CD8-positive, alpha-beta memory T cell (primary cell): ENCODE measurements at regions of chr16 and their contacts with region 1.

Region 1: DNA sequence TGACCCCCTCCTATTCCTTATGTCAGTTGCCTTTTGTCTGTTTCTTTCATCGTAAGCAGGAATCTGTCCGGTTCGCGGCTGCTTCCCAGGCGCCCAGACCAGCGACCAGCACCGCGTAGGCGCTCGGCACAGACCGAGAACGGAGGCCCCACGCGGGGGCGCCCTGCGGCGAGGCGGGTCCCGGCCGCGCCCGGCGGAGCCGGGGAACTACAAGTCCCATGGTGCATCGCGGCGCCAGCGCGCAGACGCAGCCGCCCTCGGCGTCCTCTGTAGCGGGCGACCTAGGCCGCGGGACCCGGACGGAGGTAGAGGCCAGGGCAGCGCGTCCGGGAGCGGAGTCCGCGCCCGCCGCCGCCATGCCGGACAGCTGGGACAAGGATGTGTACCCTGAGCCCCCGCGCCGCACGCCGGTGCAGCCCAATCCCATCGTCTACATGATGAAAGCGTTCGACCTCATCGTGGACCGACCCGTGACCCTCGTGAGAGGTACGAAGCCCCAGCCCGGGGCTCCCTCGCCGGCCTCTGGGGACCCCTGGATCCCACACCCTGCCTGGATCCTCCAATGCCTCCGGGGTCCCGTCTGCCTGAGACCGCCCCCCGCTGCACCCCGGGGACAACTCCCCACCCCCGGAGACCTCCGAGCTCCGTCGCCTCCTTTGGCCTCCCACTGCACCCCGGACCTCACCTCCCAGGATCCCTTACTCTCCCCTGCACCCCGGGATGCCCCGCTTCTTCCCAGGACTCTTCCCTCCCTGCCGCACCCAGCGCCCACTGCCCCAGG is at the start of gene NDUFB10:
- DNase-seq: peak; percentile 83 to 92 (median 87)
- H3K4me3 ChIP-seq: peak within 1 kb of the TSS; percentile 78
- H3K4me3 Mint-ChIP-seq: peak within 1 kb of the TSS; percentile 78 to 96 (median 89)
- H3K27ac ChIP-seq: peak within 1 kb of the TSS; percentile 73
- H3K27ac Mint-ChIP-seq: peak within 1 kb of the TSS; percentile 68 to 99 (median 91)
- H3K4me1 ChIP-seq: peaks cover 48% of the 10 kb centered on the region
- H3K4me1 Mint-ChIP-seq: peaks cover 38 to 49% (median 43%) of the 10 kb centered on the region in 3 donors
- H3K27me3 ChIP-seq: no peaks in the 10 kb centered on the region
- H3K27me3 Mint-ChIP-seq: peaks cover 0 to 1% of the 10 kb centered on the region in 2 donors
- total RNA-seq, gene NDUFB10: 150 to 152 TPM

Region 2: DNA sequence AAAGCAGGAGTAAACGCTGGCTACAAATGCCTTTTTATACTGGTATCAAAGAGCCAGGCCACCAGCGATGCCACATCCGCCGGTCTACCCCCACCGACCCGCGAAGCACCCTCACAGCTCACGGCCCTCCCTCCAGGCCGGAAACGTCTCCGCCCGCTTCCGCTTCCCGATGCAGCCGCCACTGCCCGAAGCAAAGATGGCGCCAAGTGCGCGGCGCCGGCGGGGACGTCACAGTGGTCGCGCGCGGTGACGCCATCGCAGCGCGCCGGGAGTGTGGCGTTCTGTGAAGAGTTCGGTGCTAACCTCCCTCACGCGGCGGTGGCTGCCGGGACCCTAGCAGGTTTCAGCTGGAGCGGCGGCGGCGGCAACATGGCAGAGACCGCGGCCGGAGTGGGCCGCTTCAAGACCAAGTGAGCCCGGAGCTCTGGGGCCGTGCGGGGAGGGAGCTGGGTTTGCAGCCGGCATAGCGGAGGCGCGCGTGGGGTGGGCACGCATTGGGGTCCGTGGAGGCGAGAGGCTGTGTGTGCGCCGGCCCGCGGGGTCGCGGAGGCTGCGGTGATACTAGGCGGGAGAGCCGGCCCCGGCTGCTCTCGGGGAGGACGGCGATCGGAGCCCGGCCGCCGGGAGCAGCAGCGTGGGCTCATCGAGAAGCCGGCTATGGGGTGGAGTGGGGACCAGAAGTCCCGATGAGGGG is 12.5 kb after region 1 on chr16 and contains the start of gene TBL3:
- CTCF ChIA-PET with region 1: interaction called, 5 read pairs
- POLR2A ChIA-PET with region 1: interaction called, 17 read pairs
- DNase-seq: peak; percentile 95 to 98 (median 97)
- H3K4me3 ChIP-seq: peak within 1 kb of the TSS; percentile 66
- H3K4me3 Mint-ChIP-seq: peak within 1 kb of the TSS; percentile 89 to 97 (median 93)
- H3K27ac ChIP-seq: peak within 1 kb of the TSS; percentile 83
- H3K27ac Mint-ChIP-seq: peak within 1 kb of the TSS; percentile 96 to 99 (median 98)
- H3K4me1 ChIP-seq: peaks cover 17% of the 10 kb centered on the region
- H3K4me1 Mint-ChIP-seq: peaks cover 17 to 20% (median 19%) of the 10 kb centered on the region in 3 donors
- H3K27me3 ChIP-seq: no peaks in the 10 kb centered on the region
- H3K27me3 Mint-ChIP-seq: peaks cover 0 to 5% of the 10 kb centered on the region in 2 donors
- total RNA-seq, gene TBL3: 74.6 to 78.0 TPM

Region 3: GRCh38 chr16:2383501-2383900 is 424.0 kb after region 1 on chr16:
- CTCF ChIA-PET with region 1: no interaction called
- POLR2A ChIA-PET with region 1: no interaction called
- DNase-seq: no peak
- H3K4me3 ChIP-seq: no peak overlapping the region
- H3K4me3 Mint-ChIP-seq: no peak overlapping the region
- H3K27ac ChIP-seq: no peak overlapping the region
- H3K27ac Mint-ChIP-seq: no peak overlapping the region
- H3K4me1 ChIP-seq: no peaks in the 10 kb centered on the region
- H3K4me1 Mint-ChIP-seq: no peaks in the 10 kb centered on the region
- H3K27me3 ChIP-seq: no peaks in the 10 kb centered on the region
- H3K27me3 Mint-ChIP-seq: peaks cover 0 to 17% of the 10 kb centered on the region in 2 donors